Gastrocnemius medialis (tissue), 4 donors: ENCODE measurements at regions of chr14 and their contacts with region 1.

Region 1: GRCh38 chr14:100828031-100828769 is 2.3 kb downstream of the MEG3 start:
- DNase-seq: no peak
- ATAC-seq: no peak
- H3K4me3 ChIP-seq: peak overlapping the region in 1 of 4 donors; percentile 36
- H3K27ac ChIP-seq: no peak overlapping the region
- H3K4me1 ChIP-seq: no peaks in the 10 kb centered on the region
- H3K27me3 ChIP-seq: peaks cover 23 to 42% (median 42%) of the 10 kb centered on the region in 3 donors
- CTCF ChIP-seq: peak in 3 of 5 experiments; percentile 14 to 35 (median 15)
- POLR2A ChIP-seq: no peak

Region 2: DNA sequence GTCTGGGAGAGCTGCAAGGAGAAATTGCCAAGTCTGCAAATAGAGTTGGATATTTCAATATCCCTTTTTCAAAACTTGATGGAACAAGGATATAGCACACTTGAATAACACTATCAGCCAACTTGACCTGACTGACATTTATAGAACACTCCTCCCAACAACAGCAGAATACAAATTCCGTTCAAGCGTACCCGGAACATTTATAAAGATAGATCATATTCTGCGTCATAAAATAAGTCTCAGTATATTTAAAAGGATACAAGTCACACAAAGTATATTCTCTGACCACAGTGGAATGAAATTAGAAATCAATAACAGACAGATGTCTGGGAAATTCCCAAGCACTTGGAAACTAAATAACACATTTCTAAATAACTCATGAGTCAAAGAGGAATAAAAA is 31.3 kb before region 1 on chr14:
- in situ Hi-C with region 1: no loop called
- intact Hi-C with region 1: loop called (anchors 1 kb)
- DNase-seq: no peak
- ATAC-seq: no peak
- H3K4me3 ChIP-seq: no peak overlapping the region
- H3K27ac ChIP-seq: no peak overlapping the region
- H3K4me1 ChIP-seq: no peaks in the 10 kb centered on the region
- H3K27me3 ChIP-seq: peaks cover 0 to 1% (median 0%) of the 10 kb centered on the region in 3 donors
- CTCF ChIP-seq: no peak
- POLR2A ChIP-seq: no peak

Region 3: DNA sequence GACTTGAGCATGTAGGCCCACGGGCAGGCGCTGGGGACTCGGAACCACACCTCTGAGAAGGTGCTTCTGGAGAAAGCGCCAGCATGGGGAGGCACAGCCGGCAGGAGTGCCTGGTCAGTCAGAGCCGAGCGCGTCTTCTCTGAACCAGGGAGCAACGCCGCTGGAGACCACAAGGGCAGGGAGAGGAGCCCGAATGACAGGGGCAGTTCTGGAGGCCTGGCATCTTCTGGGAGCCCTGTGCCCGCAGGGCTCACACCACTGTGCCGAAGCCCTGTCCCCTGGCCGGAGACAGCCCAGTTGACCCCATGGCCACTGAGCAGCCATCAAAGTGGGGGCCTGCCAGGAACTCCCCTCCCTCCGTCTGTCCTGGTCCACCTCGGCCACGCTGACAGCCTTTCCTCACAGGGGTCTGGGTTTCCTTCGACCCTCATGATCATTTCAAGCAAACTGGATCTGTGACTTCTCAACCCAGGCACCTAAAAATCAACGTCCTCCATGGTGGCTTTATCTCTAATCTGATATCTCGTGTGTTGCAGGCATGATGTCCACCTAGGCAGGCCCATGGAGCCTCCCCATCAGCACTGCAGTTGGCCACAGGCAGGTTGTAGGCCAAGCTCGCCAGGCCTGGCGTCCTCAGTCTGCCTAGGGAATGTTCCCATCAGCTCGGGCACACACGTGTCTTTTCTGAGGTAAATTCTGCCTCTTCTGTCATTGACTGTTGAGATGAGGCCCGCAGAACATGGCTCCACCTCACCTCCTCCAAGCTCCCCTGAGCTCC is 374.6 kb after region 1 on chr14:
- in situ Hi-C with region 1: no loop called
- intact Hi-C with region 1: no loop called
- DNase-seq: no peak
- ATAC-seq: no peak
- H3K4me3 ChIP-seq: no peak overlapping the region
- H3K27ac ChIP-seq: no peak overlapping the region
- H3K4me1 ChIP-seq: no peaks in the 10 kb centered on the region
- H3K27me3 ChIP-seq: no peaks in the 10 kb centered on the region
- CTCF ChIP-seq: no peak
- POLR2A ChIP-seq: no peak